ENCODE measurements at regions of chr10 and their contacts with region 1.

Region 1: DNA sequence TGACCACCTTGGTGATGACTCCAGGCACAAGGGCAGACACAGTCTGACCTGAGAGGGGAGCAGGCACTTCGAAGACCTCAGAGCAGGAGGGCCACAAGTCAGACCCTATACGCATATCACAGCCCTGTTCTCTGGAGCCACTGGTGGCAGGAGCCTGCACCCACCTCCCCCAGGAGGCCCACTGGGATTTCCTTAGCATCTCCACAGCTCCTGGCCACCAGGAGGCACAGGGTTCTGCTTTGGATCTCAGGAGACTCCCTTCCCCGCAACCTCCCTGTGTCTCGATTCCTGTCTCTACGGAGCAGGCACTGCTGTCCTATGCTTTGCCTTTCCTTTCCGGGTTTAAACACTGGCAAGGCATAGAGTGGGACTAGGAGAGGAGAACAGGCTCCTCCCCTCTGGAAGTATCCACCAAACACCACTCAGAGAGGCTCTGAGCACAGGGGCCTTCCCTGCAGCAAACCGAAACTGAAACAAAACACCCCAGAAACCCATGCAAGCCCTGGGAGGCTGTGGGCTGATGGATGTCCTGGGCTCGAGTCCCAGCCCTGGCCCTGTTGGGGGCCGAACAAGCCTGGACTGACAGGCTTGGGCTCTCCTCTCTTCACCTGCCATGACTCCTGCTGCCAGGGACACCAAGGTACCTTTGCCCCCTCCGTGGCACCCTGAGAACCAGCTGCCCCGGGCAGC is 166.3 kb downstream of the NEURL1 start:
- DNase-seq: peak; percentile 66
- ATAC-seq: peak; percentile 69
- H3K4me3 ChIP-seq: peak overlapping the region in 4 of 5 experiments; percentile 55 to 71 (median 64)
- H3K4me3 Mint-ChIP-seq: peak overlapping the region; percentile 87
- H3K27ac ChIP-seq: peak overlapping the region; percentile 54 to 78
- H3K27ac Mint-ChIP-seq: peak overlapping the region; percentile 78
- H3K4me1 ChIP-seq: peaks cover 8 to 14% of the 10 kb centered on the region in 2 donors
- H3K4me1 Mint-ChIP-seq: peaks cover 14% of the 10 kb centered on the region
- H3K27me3 ChIP-seq: no peaks in the 10 kb centered on the region
- H3K27me3 Mint-ChIP-seq: no peaks in the 10 kb centered on the region
- CTCF ChIP-seq: no peak

Region 2: GRCh38 chr10:103542764-103543616 is 116.8 kb before region 1 on chr10:
- CTCF ChIA-PET with region 1: no interaction called
- POLR2A ChIA-PET with region 1: no interaction called
- intact Hi-C with region 1: no loop called
- DNase-seq: peak; percentile 44
- ATAC-seq: peak; percentile 36
- H3K4me3 ChIP-seq: peak overlapping the region in 4 of 5 experiments; percentile 35 to 61 (median 54)
- H3K4me3 Mint-ChIP-seq: peak overlapping the region; percentile 79
- H3K27ac ChIP-seq: no peak overlapping the region
- H3K27ac Mint-ChIP-seq: no peak overlapping the region
- H3K4me1 ChIP-seq: peaks cover 10 to 23% of the 10 kb centered on the region in 2 donors
- H3K4me1 Mint-ChIP-seq: peaks cover 25% of the 10 kb centered on the region
- H3K27me3 ChIP-seq: peaks cover 0 to 12% (median 5%) of the 10 kb centered on the region in 4 experiments
- H3K27me3 Mint-ChIP-seq: peaks cover 18% of the 10 kb centered on the region
- CTCF ChIP-seq: peak; percentile 25

Region 3: GRCh38 chr10:103678178-103678526 is 18.3 kb after region 1 on chr10:
- CTCF ChIA-PET with region 1: interaction called, 5 read pairs
- POLR2A ChIA-PET with region 1: interaction called, 11 read pairs
- intact Hi-C with region 1: loop called (anchors 2 kb)
- DNase-seq: peak; percentile 96
- ATAC-seq: peak; percentile 93
- H3K4me3 ChIP-seq: peak overlapping the region in 4 of 5 experiments; percentile 21 to 57 (median 42)
- H3K4me3 Mint-ChIP-seq: peak overlapping the region; percentile 90
- H3K27ac ChIP-seq: peak overlapping the region; percentile 74 to 80
- H3K27ac Mint-ChIP-seq: peak overlapping the region; percentile 94
- H3K4me1 ChIP-seq: peaks cover 30 to 31% of the 10 kb centered on the region in 2 donors
- H3K4me1 Mint-ChIP-seq: peaks cover 33% of the 10 kb centered on the region
- H3K27me3 ChIP-seq: no peaks in the 10 kb centered on the region
- H3K27me3 Mint-ChIP-seq: no peaks in the 10 kb centered on the region
- CTCF ChIP-seq: no peak